ENCODE measurements at regions of chr7 and their contacts with region 1.

Region 1: DNA sequence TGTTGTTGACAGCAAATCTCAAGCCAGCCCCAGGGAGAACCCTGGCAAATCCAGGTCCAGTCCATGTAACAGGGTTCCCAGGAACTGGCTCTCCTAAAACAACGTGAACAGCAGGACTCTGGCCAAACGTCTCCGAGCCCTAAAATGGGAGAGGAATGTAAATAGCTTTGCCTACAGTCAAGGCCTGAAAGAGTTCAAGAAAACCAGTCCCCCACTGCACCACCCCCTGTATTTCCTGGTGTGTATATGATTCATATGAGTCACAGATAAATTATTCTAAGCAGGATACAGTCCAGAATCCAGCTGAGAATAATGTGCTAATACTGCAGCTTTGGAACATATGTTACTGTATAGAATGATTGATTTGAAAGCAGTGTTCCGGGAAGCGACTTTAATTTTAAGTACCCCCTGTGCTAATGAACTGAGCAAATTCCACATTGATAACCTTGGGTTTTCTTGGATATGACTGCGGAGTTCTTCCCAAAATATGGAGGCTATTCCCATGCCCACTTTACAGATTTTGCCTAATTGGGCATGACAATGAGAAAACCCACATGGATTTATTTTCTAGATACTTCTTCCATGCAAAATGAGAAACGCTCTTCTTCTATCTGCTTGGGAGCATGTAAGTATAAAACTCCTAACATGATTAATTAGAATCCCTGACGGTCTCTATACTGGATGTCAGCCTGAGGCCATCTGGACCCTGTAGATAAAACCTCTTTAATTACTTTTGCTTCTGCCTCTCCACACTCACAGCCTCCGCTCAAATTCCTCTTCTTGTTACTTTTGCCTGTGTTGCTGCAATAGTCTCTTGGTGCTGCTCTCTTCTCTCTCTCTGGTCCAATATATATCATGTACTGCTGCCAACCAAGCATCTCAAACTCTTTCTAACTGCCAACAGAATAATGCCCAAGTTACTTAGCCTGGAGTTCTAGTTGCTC is 50.2 kb downstream of the LAMB4 start:
- DNase-seq: peak; percentile 95
- ATAC-seq: peak; percentile 89
- H3K4me3 ChIP-seq: peak overlapping the region; percentile 7; the same call in 1 of the 2 replicates
- H3K27ac ChIP-seq: peak overlapping the region; percentile 94
- H3K4me1 ChIP-seq: peaks cover 25% of the 10 kb centered on the region
- H3K27me3 ChIP-seq: no peaks in the 10 kb centered on the region
- CTCF ChIP-seq: no peak
- POLR2A ChIP-seq: no peak
- RAD21 ChIP-seq: no peak

Region 2: DNA sequence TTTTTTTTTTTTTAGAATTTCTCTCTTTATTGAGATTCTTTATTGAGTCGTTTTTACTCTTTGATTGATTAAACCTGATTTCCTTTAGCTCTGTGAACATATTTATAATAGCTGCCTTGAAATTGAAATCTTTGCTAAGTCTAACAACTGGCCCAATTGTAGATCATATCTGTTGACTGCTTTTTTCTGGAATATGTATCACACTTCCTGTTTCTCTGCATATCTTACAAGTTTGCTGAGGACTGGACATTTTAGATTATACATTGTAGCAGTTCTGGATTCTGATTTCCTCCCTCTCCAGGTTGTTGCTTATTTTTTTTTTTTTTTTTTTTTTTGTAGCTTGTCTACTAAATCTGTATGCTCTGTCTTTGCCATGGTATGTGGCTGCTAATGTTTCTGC is 979.1 kb before region 1 on chr7:
- CTCF ChIA-PET with region 1: interaction called, 10 read pairs
- POLR2A ChIA-PET with region 1: no interaction called
- dilution Hi-C with region 1: no loop called
- in situ Hi-C with region 1: no loop called
- intact Hi-C with region 1: no loop called
- DNase-seq: no peak
- ATAC-seq: no peak
- H3K4me3 ChIP-seq: no peak overlapping the region
- H3K27ac ChIP-seq: no peak overlapping the region
- H3K4me1 ChIP-seq: no peaks in the 10 kb centered on the region
- H3K27me3 ChIP-seq: no peaks in the 10 kb centered on the region
- CTCF ChIP-seq: no peak
- POLR2A ChIP-seq: no peak
- RAD21 ChIP-seq: no peak

Region 3: DNA sequence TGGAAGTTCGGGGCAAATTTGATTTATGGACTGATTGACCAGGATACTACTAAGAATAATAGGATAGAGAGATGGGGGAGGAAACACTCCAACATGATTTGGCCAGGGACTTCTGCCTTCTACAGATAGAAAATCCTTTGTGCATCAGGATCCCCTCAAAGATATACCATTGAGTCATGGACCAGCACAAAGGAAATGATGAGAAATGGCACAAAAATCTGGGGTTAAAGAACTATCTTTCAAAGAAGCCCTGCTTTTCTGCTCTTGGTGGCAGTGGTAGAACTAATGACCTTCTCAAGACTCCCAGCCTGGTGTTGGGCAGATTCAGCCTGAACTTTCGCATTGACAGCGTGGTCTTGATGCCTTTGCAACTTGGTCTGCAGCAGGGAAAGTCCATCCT is 49.4 kb before region 1 on chr7:
- CTCF ChIA-PET with region 1: no interaction called
- POLR2A ChIA-PET with region 1: no interaction called
- dilution Hi-C with region 1: no loop called
- in situ Hi-C with region 1: no loop called
- intact Hi-C with region 1: loop called (anchors 5 kb)
- DNase-seq: peak; percentile 62
- ATAC-seq: peak; percentile 30; the same call in 1 of the 2 replicates
- H3K4me3 ChIP-seq: no peak overlapping the region
- H3K27ac ChIP-seq: peak overlapping the region; percentile 76
- H3K4me1 ChIP-seq: peaks cover 11% of the 10 kb centered on the region
- H3K27me3 ChIP-seq: no peaks in the 10 kb centered on the region
- CTCF ChIP-seq: no peak
- POLR2A ChIP-seq: no peak
- RAD21 ChIP-seq: no peak

Region 4: DNA sequence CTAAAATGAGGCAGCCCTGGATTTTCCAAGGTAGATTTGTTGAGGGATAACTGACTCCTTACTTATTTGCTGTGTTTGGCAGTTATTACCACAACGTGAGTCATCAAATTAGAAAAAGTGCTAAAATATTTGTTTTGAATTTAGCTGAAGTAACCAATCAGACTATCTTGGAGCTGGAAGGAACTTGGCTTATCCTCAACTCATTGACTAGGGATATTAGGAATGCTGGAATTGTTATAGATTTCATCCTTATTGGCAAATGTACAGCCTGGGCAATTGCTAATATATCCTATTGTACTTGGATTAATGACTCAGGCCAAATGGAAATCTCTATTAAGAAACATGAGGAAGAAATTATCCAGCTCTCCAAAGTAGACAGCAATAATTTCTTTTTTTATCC is 1822.0 kb after region 1 on chr7:
- CTCF ChIA-PET with region 1: no interaction called
- POLR2A ChIA-PET with region 1: no interaction called
- dilution Hi-C with region 1: no loop called
- in situ Hi-C with region 1: no loop called
- intact Hi-C with region 1: no loop called
- DNase-seq: peak; percentile 25
- ATAC-seq: no peak
- H3K4me3 ChIP-seq: no peak overlapping the region
- H3K27ac ChIP-seq: no peak overlapping the region
- H3K4me1 ChIP-seq: no peaks in the 10 kb centered on the region
- H3K27me3 ChIP-seq: no peaks in the 10 kb centered on the region
- CTCF ChIP-seq: no peak
- POLR2A ChIP-seq: no peak
- RAD21 ChIP-seq: no peak

Measured in IMR-90 (cell line).